AG04449 (cell line): ENCODE measurements at regions of chr15 and their contacts with region 1.

Region 1: DNA sequence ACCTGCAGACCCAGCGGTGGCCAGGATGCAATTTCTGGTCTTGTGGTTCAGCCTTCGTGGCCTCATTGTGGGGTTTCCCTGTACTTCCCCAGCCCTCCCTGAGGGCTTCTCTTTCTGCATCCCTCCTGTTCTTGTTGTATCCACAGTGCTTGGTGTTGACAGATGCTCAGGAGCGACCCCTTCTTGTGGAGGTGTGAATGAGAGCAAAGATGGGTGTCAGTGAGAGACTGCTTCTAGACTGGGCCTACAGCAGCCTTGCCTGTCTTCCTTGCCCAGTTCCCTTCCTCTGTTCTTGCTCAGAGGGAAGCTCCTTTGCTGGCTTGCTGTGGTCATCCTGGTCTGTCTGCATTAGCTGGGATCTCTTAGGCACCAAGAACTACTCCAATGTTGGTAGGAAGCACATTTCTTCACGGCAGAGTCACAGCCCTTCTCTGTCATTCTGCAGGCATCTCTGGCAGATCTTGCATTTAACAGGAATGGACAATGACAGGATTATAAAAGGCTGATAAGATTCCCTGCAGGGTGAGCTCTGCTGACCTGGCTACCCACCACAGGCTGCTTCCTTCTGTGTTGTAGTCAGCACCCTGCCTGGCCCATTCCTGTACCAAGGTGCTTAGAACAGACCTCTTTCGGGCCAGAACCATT is 317.8 kb upstream of the C2CD4B start:
- DNase-seq: no peak
- H3K4me3 ChIP-seq: no peak overlapping the region
- CTCF ChIP-seq: peak; percentile 46

Region 2: GRCh38 chr15:62469874-62470688 is 12.8 kb before region 1 on chr15:
- CTCF ChIA-PET with region 1: interaction called, 25 read pairs
- POLR2A ChIA-PET with region 1: interaction called, 5 read pairs
- DNase-seq: peak; percentile 64
- H3K4me3 ChIP-seq: no peak overlapping the region
- CTCF ChIP-seq: no peak